SK-N-SH (cell line): ENCODE measurements at regions of chr4 and their contacts with region 1.

Region 1: GRCh38 chr4:174222266-174222872 is 61.1 kb downstream of the FBXO8 start:
- DNase-seq: no peak
- H3K4me3 ChIP-seq: no peak overlapping the region; a peak in 1 of 4 replicates
- H3K27ac ChIP-seq: peak overlapping the region in 1 of 2 experiments; percentile 36; a peak in 2 of 4 replicates
- H3K4me1 ChIP-seq: peaks cover 1 to 26% of the 10 kb centered on the region in 2 experiments; a peak in 3 of 4 replicates
- H3K27me3 ChIP-seq: no peaks in the 10 kb centered on the region
- CTCF ChIP-seq: peak; percentile 76
- EP300 ChIP-seq: no peak
- RAD21 ChIP-seq: peak; percentile 69

Region 2: DNA sequence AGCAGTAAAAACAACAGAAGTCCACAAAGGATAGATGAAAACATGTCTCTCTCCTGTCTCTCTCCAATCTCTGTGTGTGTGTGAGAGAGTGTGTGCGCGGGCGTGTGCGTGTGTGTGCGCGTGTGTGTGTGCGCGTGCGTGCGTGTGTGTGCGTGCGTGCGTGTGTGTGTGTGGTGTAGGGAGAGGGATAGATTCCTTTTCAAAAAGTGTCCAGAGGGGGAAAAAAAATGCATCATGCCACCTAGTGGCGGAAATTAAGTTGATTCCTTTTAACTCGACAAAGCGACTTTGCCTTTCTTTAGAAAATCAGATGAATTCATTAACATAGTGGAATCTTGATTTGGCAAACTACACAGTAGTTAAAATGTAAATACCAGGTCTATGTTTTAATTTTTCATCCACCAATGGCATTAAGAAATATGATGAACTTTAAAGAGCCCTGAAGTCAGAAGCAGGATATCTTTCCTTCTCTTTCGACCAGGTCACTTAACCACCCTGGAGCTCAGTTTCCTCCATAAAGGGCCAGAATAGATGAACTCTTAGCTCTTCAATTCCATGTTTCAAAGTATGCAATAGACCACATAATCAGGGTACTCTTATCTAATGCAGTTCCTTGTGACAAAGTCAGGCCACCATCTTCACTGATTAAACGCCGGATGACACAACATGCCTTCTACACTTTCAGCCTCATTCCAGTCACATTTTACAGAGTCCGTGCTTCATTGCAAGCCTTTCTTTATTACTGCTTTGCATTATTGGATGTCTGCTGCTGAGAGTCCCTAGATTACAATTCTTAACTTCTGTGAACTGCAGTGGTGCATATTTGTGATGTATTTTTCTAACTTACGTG is 101.7 kb before region 1 on chr4:
- CTCF ChIA-PET with region 1: interaction called, 4 read pairs
- POLR2A ChIA-PET with region 1: interaction called, 16 read pairs
- DNase-seq: peak; percentile 69
- H3K4me3 ChIP-seq: peak overlapping the region; percentile 40 to 59
- H3K27ac ChIP-seq: peak overlapping the region; percentile 49 to 100; a peak in 3 of 4 replicates
- H3K4me1 ChIP-seq: peaks cover 4 to 11% of the 10 kb centered on the region in 2 experiments; a peak in 2 of 4 replicates
- H3K27me3 ChIP-seq: no peaks in the 10 kb centered on the region
- CTCF ChIP-seq: peak; percentile 72
- EP300 ChIP-seq: peak; percentile 5 to 67; a peak in 1 of 4 replicates
- RAD21 ChIP-seq: peak; percentile 79

Region 3: DNA sequence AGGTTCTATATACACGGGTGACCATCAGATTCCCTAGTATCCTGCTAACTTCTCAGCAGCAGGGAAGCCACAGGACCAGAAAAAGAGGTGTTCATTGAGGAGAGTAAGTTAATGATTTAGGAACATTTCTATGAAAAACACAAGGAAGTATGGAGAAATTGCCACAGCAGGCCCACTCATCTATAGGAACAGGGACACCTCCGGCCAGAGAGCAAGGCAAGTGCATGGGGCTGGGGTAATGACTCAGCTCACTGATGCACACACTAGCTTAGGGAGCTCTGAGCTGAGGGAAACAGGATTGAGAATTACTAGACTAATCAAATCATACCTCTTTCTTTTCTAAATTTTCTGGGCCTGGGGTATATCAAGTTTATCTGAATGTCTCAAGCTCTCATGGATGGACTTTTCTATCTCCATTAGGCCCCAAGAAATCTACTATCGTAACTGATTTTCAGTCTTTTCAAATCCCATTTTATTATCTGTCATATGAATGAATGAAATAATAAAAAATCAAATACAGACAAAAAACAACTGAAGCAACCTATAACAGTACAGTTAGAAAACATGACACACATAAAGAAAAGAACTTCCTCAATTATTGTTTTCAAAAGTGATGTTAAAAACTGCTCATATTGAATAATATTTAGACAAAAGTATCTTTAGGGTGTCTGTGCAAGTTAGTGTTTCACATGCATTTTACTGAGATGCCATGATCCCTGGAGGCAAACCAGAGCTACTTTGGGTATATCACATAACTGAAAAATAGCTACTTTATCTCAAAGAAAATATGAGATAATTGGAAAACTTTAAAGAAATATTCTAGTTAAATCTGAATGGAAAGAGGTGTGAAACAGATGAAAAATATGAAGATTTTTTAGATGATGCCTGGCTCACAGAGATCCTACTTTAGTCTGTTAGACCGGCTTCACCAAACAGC is 28.7 kb before region 1 on chr4:
- CTCF ChIA-PET with region 1: interaction called, 25 read pairs
- POLR2A ChIA-PET with region 1: interaction called, 38 read pairs
- DNase-seq: peak; percentile 42
- H3K4me3 ChIP-seq: no peak overlapping the region
- H3K27ac ChIP-seq: peak overlapping the region in 1 of 2 experiments; percentile 100; a peak in 3 of 4 replicates
- H3K4me1 ChIP-seq: peaks cover 0 to 46% of the 10 kb centered on the region in 2 experiments; a peak in 2 of 4 replicates
- H3K27me3 ChIP-seq: no peaks in the 10 kb centered on the region
- CTCF ChIP-seq: no peak
- EP300 ChIP-seq: peak in 1 of 2 experiments; percentile 98; a peak in 3 of 4 replicates
- RAD21 ChIP-seq: peak; percentile 33; the same call in 1 of the 2 replicates

Region 4: GRCh38 chr4:174260099-174260498 is 37.7 kb after region 1 on chr4:
- CTCF ChIA-PET with region 1: interaction called, 17 read pairs
- POLR2A ChIA-PET with region 1: interaction called, 31 read pairs
- DNase-seq: peak; percentile 30
- H3K4me3 ChIP-seq: peak overlapping the region in 1 of 2 experiments; percentile 33; a peak in 2 of 4 replicates
- H3K27ac ChIP-seq: peak overlapping the region; percentile 30 to 98; a peak in 3 of 4 replicates
- H3K4me1 ChIP-seq: peaks cover 32 to 36% of the 10 kb centered on the region in 2 experiments
- H3K27me3 ChIP-seq: no peaks in the 10 kb centered on the region
- CTCF ChIP-seq: no peak
- EP300 ChIP-seq: peak in 1 of 2 experiments; percentile 94; a peak in 3 of 4 replicates
- RAD21 ChIP-seq: no peak